ENCODE measurements at regions of chr7 and their contacts with region 1.

Region 1: DNA sequence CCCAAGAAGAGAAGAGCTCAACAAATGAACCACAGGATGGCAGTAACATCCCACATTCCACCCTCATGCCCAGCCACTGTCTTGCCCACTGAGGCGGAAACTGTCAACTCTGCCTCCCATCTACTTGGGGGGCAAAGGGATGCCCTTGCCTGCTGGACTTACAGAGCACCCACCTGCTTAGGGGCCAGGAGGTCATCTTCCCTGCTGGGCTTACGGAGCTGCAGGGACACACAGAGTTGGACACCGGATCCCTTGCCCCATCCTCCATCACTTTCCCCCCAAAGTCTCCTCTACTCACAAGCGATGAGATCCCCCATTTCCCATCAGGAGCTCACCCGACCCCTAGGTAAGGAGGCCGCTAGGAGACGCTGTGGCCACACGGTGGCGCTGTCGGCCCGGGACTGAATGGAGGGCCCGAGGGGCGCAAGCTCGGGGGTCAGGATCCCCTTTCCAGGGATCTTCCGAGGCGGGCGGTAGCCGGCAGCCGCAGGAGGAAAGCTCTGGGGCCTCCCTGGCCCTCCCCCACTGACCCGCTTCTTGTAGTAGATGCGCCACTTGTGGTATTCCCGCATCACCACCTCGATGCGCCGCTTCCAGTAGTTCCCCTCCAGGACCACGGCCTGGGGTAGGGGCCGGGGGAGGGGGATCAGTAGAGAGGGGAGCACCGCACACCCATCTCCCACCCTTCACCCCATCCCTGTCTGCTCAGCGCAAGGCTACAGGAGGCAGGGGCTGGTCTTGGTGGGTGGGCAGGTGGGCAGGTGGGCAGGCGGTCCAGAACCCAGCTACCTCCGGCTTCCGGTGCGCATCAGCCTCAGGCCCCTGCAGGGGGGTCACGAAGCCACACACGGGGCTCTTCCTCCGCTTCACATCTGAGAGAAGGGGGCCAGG is 17.3 kb downstream of the MLXIPL start:
- DNase-seq: peak; percentile 63
- H3K4me3 Mint-ChIP-seq: no peak overlapping the region
- H3K27ac Mint-ChIP-seq: no peak overlapping the region
- H3K4me1 Mint-ChIP-seq: no peaks in the 10 kb centered on the region
- H3K27me3 Mint-ChIP-seq: peaks cover 6% of the 10 kb centered on the region

Region 2: DNA sequence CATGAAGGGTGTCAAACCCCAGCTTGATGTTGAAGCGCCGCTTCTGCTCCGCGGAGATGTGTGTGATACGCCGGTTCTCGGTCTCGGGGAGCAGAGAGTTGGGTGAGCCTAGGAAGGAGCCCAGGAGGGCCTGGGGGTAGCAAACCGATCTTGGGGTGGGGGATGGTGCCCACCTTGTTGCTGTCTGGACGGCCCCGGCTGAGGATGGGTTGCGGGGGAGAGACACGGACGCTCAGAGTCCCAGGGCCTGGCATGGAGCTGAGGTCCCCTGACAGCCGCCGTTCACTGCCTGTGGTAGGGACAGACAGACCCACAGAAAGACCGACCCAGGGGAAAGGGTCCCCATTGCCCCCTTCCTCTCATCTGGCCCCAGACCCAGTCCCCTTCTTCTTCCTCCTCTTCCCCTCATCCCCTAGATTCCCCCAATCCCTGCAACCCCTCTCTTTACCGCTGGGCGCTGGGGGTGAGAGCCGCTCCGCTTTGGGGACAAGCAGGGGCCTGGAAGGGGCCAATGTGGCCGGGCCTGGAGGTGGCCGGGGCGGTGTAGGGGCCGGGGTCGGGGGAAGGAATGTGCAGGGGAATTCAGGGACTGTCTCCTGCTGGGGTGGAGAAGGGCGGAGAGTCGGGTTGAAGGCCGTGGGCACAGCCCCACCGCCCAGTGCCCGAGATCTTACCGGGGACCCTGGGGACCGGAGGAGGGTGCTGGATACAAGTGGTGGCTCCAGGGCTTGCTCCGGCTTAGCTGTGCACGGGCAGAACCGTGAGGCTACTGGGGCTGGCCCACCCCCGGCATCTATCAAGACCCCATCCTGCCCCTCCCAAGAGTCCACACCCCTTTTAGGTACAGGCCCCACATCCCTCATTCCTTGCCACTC is 10.6 kb before region 1 on chr7:
- CTCF ChIA-PET with region 1: interaction called, 10 read pairs
- intact Hi-C with region 1: no loop called
- DNase-seq: no peak
- H3K4me3 Mint-ChIP-seq: no peak overlapping the region
- H3K27ac Mint-ChIP-seq: no peak overlapping the region
- H3K4me1 Mint-ChIP-seq: no peaks in the 10 kb centered on the region
- H3K27me3 Mint-ChIP-seq: peaks cover 10% of the 10 kb centered on the region

Region 3: GRCh38 chr7:73647725-73648592 is 40.9 kb after region 1 on chr7:
- CTCF ChIA-PET with region 1: interaction called, 12 read pairs
- intact Hi-C with region 1: no loop called
- DNase-seq: peak; percentile 30
- H3K4me3 Mint-ChIP-seq: peak overlapping the region; percentile 33
- H3K27ac Mint-ChIP-seq: no peak overlapping the region
- H3K4me1 Mint-ChIP-seq: peaks cover 11% of the 10 kb centered on the region
- H3K27me3 Mint-ChIP-seq: peaks cover 50% of the 10 kb centered on the region

Region 4: GRCh38 chr7:73701357-73701995 is 94.4 kb after region 1 on chr7:
- CTCF ChIA-PET with region 1: interaction called, 14 read pairs
- intact Hi-C with region 1: no loop called
- DNase-seq: peak; percentile 36
- H3K4me3 Mint-ChIP-seq: no peak overlapping the region
- H3K27ac Mint-ChIP-seq: no peak overlapping the region
- H3K4me1 Mint-ChIP-seq: peaks cover 13% of the 10 kb centered on the region
- H3K27me3 Mint-ChIP-seq: no peaks in the 10 kb centered on the region

Region 5: GRCh38 chr7:73851410-73852234 is 244.6 kb after region 1 on chr7:
- CTCF ChIA-PET with region 1: interaction called, 13 read pairs
- intact Hi-C with region 1: loop called (anchors 1 kb)
- DNase-seq: peak; percentile 60
- H3K4me3 Mint-ChIP-seq: no peak overlapping the region
- H3K27ac Mint-ChIP-seq: peak overlapping the region; percentile 53
- H3K4me1 Mint-ChIP-seq: peaks cover 30% of the 10 kb centered on the region
- H3K27me3 Mint-ChIP-seq: peaks cover 14% of the 10 kb centered on the region